Activated T-helper 2 cell treated with anti-CD3 and anti-CD28 coated beads, Interferon-gamma antibody, Interleukin-2, Interleukin-4, amounts not matched to agents 10 μg/mL and 5 μg/mL and 100 μg/mL, durations not matched to agents 14 hours and 24 hours and 36 hours (primary cell): ENCODE measurements at regions of chr5 and their contacts with region 1.

Region 1: GRCh38 chr5:31581498-31582099 is 49.5 kb downstream of the C5orf22 start:
- DNase-seq: no peak
- H3K4me3 Mint-ChIP-seq: no peak overlapping the region
- H3K27ac Mint-ChIP-seq: no peak overlapping the region
- H3K4me1 Mint-ChIP-seq: no peaks in the 10 kb centered on the region
- H3K27me3 Mint-ChIP-seq: peaks cover 15% of the 10 kb centered on the region

Region 2: DNA sequence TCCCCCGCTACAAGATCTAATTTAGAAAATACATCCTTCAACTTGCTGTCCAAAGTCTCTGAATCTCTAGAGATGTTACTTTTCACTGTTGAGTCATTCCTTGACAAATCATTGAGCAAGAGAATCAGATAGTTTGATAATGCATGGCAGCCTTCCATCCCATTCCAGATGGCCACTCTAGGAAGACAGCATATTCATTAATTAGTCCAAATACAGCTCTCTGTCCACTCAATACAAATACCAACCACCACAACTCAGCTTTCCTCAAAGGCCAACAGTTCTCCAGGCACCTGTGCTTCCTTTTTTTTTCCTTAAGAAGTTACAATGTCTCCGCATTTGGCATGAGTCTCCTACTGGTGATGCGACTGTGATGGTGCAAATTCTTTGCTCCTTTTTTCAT is 122.0 kb before region 1 on chr5:
- intact Hi-C with region 1: no loop called
- DNase-seq: no peak
- H3K4me3 Mint-ChIP-seq: no peak overlapping the region
- H3K27ac Mint-ChIP-seq: no peak overlapping the region
- H3K4me1 Mint-ChIP-seq: no peaks in the 10 kb centered on the region
- H3K27me3 Mint-ChIP-seq: no peaks in the 10 kb centered on the region

Region 3: GRCh38 chr5:31638748-31639418 is 57.3 kb after region 1 on chr5 and contains the start of gene PDZD2:
- intact Hi-C with region 1: loop called (anchors 5 kb)
- DNase-seq: peak; percentile 51
- H3K4me3 Mint-ChIP-seq: peak within 1 kb of the TSS; percentile 84
- H3K27ac Mint-ChIP-seq: peak within 1 kb of the TSS; percentile 26
- H3K4me1 Mint-ChIP-seq: peaks cover 6% of the 10 kb centered on the region
- H3K27me3 Mint-ChIP-seq: peaks cover 23% of the 10 kb centered on the region
- total RNA-seq, gene PDZD2: 0.05 and 0.25 TPM in 2 replicates

Region 4: DNA sequence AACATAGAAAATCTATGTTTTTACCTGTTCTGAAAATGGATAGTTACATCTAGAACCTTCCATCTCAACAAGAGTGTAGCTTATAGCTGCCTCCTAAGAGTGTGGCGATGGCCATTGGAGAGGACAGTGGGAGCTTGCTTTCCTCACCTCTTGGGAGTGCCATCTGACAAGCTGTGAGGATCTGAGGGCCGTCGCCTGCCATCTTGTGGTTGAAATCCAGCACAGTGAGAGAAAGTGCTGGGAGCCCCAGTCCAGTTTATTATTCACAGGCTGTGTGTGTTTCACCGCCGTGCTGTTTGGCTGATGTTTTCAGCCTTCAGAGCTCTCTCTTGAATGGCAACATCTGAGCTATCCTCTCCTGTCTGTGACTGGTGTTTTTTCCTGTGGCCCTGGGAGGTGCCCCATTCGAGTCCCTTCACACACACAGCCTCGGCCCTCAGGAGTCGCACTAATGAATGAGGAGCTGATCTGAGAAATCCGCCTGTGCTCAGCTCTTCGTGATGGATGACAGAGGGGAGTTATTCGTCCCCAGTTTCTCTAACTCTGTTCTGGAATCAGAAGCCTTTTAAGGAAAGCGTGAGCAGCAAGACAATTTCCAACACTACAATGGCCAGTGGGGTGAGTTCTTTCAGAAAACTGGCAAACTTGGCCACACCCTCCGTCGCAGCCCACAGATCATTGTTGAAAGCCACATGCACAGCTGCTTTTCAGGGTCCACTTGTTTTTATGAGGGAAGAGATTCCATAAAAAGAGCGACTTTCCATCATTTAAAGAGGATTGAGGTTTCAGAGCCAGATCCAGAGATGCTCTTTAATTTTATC is 227.7 kb after region 1 on chr5:
- intact Hi-C with region 1: loop called (anchors 2 kb)
- DNase-seq: no peak
- H3K4me3 Mint-ChIP-seq: no peak overlapping the region
- H3K27ac Mint-ChIP-seq: no peak overlapping the region
- H3K4me1 Mint-ChIP-seq: no peaks in the 10 kb centered on the region
- H3K27me3 Mint-ChIP-seq: no peaks in the 10 kb centered on the region

Region 5: GRCh38 chr5:32076699-32077695 is 495.4 kb after region 1 on chr5:
- intact Hi-C with region 1: loop called (anchors 1 kb)
- DNase-seq: no peak
- H3K4me3 Mint-ChIP-seq: no peak overlapping the region
- H3K27ac Mint-ChIP-seq: no peak overlapping the region
- H3K4me1 Mint-ChIP-seq: no peaks in the 10 kb centered on the region
- H3K27me3 Mint-ChIP-seq: no peaks in the 10 kb centered on the region

Region 6: DNA sequence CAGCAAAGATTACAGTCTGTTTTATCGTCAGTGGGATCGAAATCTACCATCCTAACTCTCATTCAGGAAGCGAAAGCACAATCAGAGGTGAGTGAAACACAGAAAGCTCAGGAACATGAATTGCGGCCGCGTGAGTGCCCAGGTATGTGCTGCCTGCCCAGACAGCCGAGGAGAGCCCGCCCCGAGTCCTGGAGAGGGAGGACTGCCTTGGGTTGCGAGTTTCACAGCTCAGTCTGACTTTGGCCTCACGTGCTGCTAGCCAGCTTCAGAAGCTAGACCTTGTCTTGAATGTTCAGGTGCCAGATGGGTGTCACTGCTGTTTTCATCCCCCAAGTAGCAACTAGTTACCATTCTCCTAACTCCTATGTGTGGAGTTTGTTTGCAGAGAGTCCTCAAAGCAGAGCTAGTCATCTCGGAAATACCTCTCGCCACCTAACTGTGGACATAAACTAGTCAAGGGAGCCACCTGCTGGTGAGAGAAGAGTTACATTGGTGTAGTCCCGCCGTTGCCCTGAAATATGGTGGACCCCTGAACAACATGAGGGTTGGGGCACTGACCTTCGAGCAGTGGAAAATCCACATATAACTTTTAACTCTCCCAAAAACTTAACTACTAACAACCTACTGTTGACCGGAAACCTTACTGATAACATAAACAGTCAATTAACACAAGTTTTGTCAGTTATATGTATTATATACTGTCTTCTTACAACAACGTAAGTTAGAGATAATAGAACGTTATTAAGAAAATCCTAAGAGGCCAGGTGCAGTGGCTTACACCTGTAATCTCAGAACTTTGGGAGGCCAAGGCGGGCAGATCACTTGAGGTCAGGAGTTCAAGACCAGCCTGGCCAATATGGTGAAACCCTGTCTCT is 511.6 kb after region 1 on chr5:
- intact Hi-C with region 1: loop called (anchors 5 kb)
- DNase-seq: peak; percentile 42
- H3K4me3 Mint-ChIP-seq: no peak overlapping the region
- H3K27ac Mint-ChIP-seq: no peak overlapping the region
- H3K4me1 Mint-ChIP-seq: no peaks in the 10 kb centered on the region
- H3K27me3 Mint-ChIP-seq: no peaks in the 10 kb centered on the region